ENCODE measurements at regions of chr13 and their contacts with region 1.

Region 1: GRCh38 chr13:40613192-40613818 is 53.1 kb downstream of the FOXO1 start:
- DNase-seq: peak; percentile 73
- ATAC-seq: peak; percentile 90
- H3K4me3 Mint-ChIP-seq: peak overlapping the region; percentile 75
- H3K27ac Mint-ChIP-seq: peak overlapping the region; percentile 96
- H3K4me1 Mint-ChIP-seq: peaks cover 93% of the 10 kb centered on the region
- H3K27me3 Mint-ChIP-seq: no peaks in the 10 kb centered on the region
- CTCF ChIP-seq: no peak

Region 2: DNA sequence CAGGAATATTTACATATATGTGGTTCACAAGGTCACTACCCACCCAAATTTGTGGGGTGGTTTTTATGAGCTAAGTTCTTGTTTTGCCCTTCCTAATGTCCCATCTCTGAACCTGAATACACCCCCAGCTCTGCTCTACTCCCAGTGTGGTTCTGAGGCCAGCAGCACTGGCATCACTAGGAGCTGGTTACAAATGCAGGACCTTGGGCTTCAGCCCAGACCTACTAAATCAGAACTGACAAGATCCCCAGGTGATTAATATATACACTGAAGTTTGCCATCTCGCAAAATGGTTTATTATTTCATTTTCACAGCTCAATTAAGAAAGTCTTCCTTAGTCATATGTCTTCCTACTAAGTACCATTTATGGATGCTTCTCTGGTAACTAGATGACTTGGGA is 14.7 kb before region 1 on chr13:
- CTCF ChIA-PET with region 1: interaction called, 4 read pairs
- POLR2A ChIA-PET with region 1: interaction called, 14 read pairs
- intact Hi-C with region 1: no loop called
- DNase-seq: no peak
- ATAC-seq: no peak
- H3K4me3 Mint-ChIP-seq: peak overlapping the region; percentile 62
- H3K27ac Mint-ChIP-seq: peak overlapping the region; percentile 94
- H3K4me1 Mint-ChIP-seq: peaks cover 91% of the 10 kb centered on the region
- H3K27me3 Mint-ChIP-seq: no peaks in the 10 kb centered on the region
- CTCF ChIP-seq: no peak

Region 3: GRCh38 chr13:40790134-40790581 is 176.9 kb after region 1 on chr13:
- CTCF ChIA-PET with region 1: no interaction called
- POLR2A ChIA-PET with region 1: no interaction called
- intact Hi-C with region 1: no loop called
- DNase-seq: no peak
- ATAC-seq: no peak
- H3K4me3 Mint-ChIP-seq: peak overlapping the region; percentile 83
- H3K27ac Mint-ChIP-seq: peak overlapping the region; percentile 79
- H3K4me1 Mint-ChIP-seq: peaks cover 45% of the 10 kb centered on the region
- H3K27me3 Mint-ChIP-seq: no peaks in the 10 kb centered on the region
- CTCF ChIP-seq: no peak